ENCODE measurements at regions of chr7 and their contacts with region 1.

Region 1: DNA sequence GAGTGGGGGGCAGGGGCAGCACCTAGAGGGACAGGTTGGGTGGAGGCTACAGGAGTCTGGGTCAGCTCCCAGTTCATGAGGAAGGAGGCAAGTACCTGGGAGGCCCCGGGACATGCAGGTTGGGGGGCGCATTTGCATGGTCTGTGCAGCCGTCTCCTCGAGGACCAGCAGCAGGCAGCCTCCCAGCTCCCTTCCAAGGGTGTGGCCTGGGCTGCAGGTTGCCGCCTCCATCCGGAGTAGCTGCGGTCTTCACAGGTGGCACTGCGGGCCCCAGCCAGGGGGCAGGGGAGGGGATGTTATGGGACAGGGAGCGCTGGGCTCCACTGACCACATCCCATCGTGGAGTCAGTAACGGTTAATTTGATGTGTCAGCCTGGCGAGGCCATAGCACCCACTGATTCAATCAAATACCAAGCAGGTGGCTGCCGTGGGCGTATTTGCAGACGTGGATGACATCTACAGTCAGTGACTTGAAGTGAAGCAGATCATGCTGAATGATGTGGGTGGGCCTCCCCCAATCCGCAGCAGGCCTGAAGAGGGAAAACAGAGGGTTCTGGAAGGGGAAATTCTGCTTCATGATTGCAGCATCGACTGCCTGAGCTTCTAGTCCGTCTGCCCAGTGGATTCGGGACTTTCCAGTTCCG is 81.6 kb downstream of the PRKAG2 start:
- DNase-seq: peak; percentile 71 to 87 (median 75)
- H3K4me3 ChIP-seq: no peak overlapping the region
- H3K4me3 Mint-ChIP-seq: no peak overlapping the region
- H3K27ac ChIP-seq: peak overlapping the region in 1 of 2 donors; percentile 99
- H3K27ac Mint-ChIP-seq: peak overlapping the region; percentile 81 to 99 (median 94)
- H3K4me1 ChIP-seq: peaks cover 59 to 67% of the 10 kb centered on the region in 2 donors
- H3K4me1 Mint-ChIP-seq: peaks cover 71% of the 10 kb centered on the region
- H3K27me3 ChIP-seq: no peaks in the 10 kb centered on the region
- H3K27me3 Mint-ChIP-seq: peaks cover 0 to 3% (median 0%) of the 10 kb centered on the region in 3 donors
- CTCF ChIP-seq: no peak

Region 2: DNA sequence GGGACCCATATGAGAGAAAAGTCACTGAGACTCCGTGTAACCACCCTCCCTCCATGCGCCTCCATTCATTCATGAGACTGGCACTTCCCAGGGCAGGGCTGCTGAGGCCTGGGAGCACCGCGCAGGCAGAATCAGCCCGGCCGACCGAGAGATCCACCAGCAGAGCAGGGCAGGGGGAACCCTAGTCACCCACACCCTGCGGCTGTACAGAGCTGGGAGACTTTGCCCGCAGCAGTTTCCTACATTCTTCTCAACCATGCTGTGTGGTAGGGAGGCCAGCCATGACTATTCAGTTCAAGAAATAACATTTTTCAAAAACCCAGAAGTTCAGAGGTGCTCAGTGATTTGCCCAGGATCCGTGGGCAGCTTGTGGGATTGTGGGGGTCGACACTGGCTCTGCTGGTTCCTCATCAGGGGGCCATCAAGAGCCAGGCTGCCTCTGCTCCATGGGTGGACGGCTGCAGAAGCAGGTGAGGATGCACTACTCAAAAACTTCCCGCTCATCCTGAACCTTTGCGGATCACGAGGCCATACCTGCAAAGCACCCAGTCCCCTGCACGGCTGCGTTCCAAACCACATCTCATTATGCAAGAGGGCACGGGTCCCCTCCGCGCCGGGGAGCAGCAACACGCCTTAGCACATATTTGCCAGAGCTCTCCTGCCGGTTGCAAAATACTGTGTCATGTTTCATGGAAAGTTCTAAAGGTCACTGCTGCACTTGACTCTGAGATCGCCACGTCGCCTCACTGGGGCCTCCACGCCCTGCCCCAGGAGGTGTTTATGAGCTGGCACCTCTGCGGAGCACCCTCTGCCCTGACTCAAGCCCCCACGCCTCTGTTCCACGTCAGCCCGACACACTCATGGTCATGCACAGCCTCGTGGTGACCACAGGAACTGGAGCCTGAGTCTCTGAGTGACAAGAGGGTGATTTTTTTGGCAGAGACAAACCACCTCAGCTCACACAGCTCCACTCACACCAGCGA is 50.3 kb before region 1 on chr7:
- intact Hi-C with region 1: loop called in 1 of 2 experiments (anchors 5 kb)
- DNase-seq: peak; percentile 92 to 99 (median 93)
- H3K4me3 ChIP-seq: no peak overlapping the region
- H3K4me3 Mint-ChIP-seq: peak overlapping the region; percentile 32 to 50
- H3K27ac ChIP-seq: peak overlapping the region; percentile 36 to 63
- H3K27ac Mint-ChIP-seq: peak overlapping the region; percentile 70 to 96 (median 92)
- H3K4me1 ChIP-seq: peaks cover 40 to 41% of the 10 kb centered on the region in 2 donors
- H3K4me1 Mint-ChIP-seq: peaks cover 52% of the 10 kb centered on the region
- H3K27me3 ChIP-seq: no peaks in the 10 kb centered on the region
- H3K27me3 Mint-ChIP-seq: peaks cover 0 to 3% (median 2%) of the 10 kb centered on the region in 3 donors
- CTCF ChIP-seq: peak; percentile 40

Region 3: GRCh38 chr7:151808400-151809183 is 13.3 kb after region 1 on chr7:
- intact Hi-C with region 1: no loop called
- DNase-seq: peak; percentile 87 to 93 (median 89)
- H3K4me3 ChIP-seq: peak overlapping the region in 1 of 3 experiments; percentile 55
- H3K4me3 Mint-ChIP-seq: peak overlapping the region; percentile 61 to 90
- H3K27ac ChIP-seq: peak overlapping the region; percentile 92 to 96
- H3K27ac Mint-ChIP-seq: peak overlapping the region; percentile 97 to 99 (median 98)
- H3K4me1 ChIP-seq: peaks cover 53 to 54% of the 10 kb centered on the region in 2 donors
- H3K4me1 Mint-ChIP-seq: peaks cover 67% of the 10 kb centered on the region
- H3K27me3 ChIP-seq: no peaks in the 10 kb centered on the region
- H3K27me3 Mint-ChIP-seq: peaks cover 0 to 7% (median 0%) of the 10 kb centered on the region in 3 donors
- CTCF ChIP-seq: peak; percentile 11

Region 4: GRCh38 chr7:151844071-151844824 is 49.0 kb after region 1 on chr7:
- intact Hi-C with region 1: loop called in 1 of 2 experiments (anchors 2 kb)
- DNase-seq: peak; percentile 91 to 96 (median 95)
- H3K4me3 ChIP-seq: no peak overlapping the region
- H3K4me3 Mint-ChIP-seq: peak overlapping the region in 1 of 2 donors; percentile 73
- H3K27ac ChIP-seq: peak overlapping the region; percentile 89 to 94
- H3K27ac Mint-ChIP-seq: peak overlapping the region; percentile 94 to 99 (median 98)
- H3K4me1 ChIP-seq: peaks cover 67 to 68% of the 10 kb centered on the region in 2 donors
- H3K4me1 Mint-ChIP-seq: peaks cover 62% of the 10 kb centered on the region
- H3K27me3 ChIP-seq: no peaks in the 10 kb centered on the region
- H3K27me3 Mint-ChIP-seq: peaks cover 0 to 1% (median 0%) of the 10 kb centered on the region in 3 donors
- CTCF ChIP-seq: no peak

Region 5: DNA sequence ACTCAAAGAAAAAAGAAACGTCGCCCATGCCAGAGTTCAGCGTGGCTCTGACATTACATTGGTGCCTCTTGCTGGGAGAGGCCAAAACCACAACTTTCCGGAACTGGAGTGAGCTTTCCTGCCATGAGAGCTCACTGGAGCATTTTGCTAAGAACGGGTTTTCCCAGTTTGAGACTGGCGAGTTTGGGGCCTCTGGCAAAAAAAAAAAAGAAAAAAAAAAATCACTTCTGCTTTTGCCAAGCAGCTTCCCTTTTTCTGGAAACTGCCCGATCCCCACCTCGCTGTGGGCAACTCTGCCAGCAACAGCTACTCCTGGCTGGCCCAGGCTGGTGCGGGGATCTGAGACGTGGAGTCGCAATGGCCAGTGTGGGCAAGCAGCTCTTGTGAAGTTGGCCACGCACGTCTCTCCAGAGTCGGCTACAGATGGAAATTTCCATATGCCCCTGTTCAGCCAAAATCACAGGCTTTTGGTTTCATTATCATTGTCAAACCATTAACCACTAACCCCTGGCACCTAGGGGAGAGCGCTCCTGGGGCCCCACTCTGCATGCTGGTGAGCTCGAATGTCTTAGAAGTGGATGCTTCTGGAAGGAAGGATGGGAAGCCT is 56.0 kb after region 1 on chr7:
- intact Hi-C with region 1: loop called in 1 of 2 experiments (anchors 5 kb)
- DNase-seq: peak; percentile 90 to 98 (median 98)
- H3K4me3 ChIP-seq: peak overlapping the region; percentile 21 to 66 (median 30)
- H3K4me3 Mint-ChIP-seq: peak overlapping the region; percentile 69 to 85
- H3K27ac ChIP-seq: peak overlapping the region; percentile 97 to 98
- H3K27ac Mint-ChIP-seq: peak overlapping the region; percentile 98 to 100 (median 100)
- H3K4me1 ChIP-seq: peaks cover 69 to 74% of the 10 kb centered on the region in 2 donors
- H3K4me1 Mint-ChIP-seq: peaks cover 73% of the 10 kb centered on the region
- H3K27me3 ChIP-seq: no peaks in the 10 kb centered on the region
- H3K27me3 Mint-ChIP-seq: peaks cover 0 to 3% (median 1%) of the 10 kb centered on the region in 3 donors
- CTCF ChIP-seq: no peak

Region 6: DNA sequence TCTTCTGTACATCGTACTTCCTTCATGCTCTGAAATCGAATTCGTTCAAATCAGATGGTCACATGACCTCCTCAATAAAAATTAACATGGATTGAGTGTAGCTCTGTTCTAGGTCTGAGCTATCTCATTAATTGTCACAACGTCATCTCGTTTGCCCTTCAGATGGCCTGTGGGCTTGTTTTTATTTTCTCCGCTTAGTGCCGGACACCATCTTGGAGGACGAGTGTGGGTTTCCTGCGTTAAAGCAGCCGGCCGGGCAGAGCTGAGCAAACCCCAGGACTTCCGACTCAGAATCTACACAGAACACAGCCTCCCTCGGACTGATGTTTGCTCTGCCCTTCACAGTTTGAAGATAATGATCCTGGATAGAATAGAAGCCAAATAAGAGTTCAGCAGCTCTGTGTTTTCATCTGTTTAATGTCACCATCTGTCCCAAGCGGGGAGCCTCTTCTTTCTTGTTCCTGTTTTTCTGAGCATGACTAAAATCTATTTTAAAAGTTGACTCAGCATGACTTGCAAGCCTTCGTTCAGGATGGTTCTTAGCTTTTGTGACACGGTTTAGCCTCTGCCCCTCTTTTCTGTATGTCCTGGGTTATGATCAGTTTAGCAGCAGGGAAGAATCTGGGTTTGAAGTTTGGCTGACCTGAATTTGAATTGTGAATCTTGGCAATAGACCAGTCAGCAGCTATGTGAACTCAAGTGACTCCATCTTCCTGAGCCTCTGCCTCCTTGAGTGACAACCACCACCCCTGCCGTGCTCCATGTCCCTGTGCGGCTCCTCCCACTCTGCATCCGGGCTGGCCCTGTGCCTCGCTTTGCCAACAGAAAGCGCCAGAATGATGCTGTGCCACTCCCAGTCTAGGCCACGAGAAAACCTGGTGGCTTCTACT is 130.4 kb after region 1 on chr7:
- intact Hi-C with region 1: loop called (anchors 5 to 10 kb)
- DNase-seq: peak; percentile 78 to 86 (median 85)
- H3K4me3 ChIP-seq: peak overlapping the region in 1 of 3 experiments; percentile 46
- H3K4me3 Mint-ChIP-seq: peak overlapping the region; percentile 45 to 78
- H3K27ac ChIP-seq: peak overlapping the region; percentile 99 to 100
- H3K27ac Mint-ChIP-seq: peak overlapping the region; percentile 98 to 100 (median 100)
- H3K4me1 ChIP-seq: peaks cover 69 to 70% of the 10 kb centered on the region in 2 donors
- H3K4me1 Mint-ChIP-seq: peaks cover 65% of the 10 kb centered on the region
- H3K27me3 ChIP-seq: no peaks in the 10 kb centered on the region
- H3K27me3 Mint-ChIP-seq: peaks cover 0 to 2% (median 0%) of the 10 kb centered on the region in 3 donors
- CTCF ChIP-seq: no peak